ENCODE measurements at regions of chr2 and their contacts with region 1.

Region 1: DNA sequence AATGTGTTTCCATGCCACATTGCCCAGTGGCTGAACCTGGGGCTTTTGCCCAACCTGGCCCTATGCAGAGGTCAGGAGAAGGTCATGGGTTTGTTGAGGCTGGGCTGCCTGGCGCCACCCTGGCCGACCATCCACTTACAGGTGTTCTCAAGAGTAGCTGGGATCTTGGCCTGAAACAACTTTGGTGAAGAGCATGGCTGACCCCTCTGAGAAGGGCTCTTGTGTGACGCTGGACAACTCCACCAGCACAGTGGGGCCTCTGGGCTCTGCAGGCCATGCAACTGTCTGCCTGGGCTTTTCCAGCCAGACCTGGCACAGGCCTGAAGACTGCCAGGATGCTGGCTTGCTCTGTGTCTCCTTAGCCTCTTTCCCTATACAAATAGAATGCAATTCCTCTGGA is 76.4 kb upstream of the ZNG1B start:
- DNase-seq: no peak
- H3K4me3 ChIP-seq: no peak overlapping the region
- H3K27ac ChIP-seq: no peak overlapping the region
- H3K4me1 ChIP-seq: peaks cover 0 to 3% (median 0%) of the 10 kb centered on the region in 4 donors
- H3K27me3 ChIP-seq: no peaks in the 10 kb centered on the region
- CTCF ChIP-seq: no peak
- EP300 ChIP-seq: no peak
- POLR2A ChIP-seq: no peak

Region 2: GRCh38 chr2:113260991-113261390 is 100.1 kb before region 1 on chr2:
- in situ Hi-C with region 1: loop called in 2 of 4 experiments (anchors 10 to 25 kb)
- intact Hi-C with region 1: no loop called
- DNase-seq: no peak
- H3K4me3 ChIP-seq: no peak overlapping the region
- H3K27ac ChIP-seq: no peak overlapping the region
- H3K4me1 ChIP-seq: no peaks in the 10 kb centered on the region
- H3K27me3 ChIP-seq: no peaks in the 10 kb centered on the region
- CTCF ChIP-seq: no peak
- EP300 ChIP-seq: no peak
- POLR2A ChIP-seq: no peak

Region 3: DNA sequence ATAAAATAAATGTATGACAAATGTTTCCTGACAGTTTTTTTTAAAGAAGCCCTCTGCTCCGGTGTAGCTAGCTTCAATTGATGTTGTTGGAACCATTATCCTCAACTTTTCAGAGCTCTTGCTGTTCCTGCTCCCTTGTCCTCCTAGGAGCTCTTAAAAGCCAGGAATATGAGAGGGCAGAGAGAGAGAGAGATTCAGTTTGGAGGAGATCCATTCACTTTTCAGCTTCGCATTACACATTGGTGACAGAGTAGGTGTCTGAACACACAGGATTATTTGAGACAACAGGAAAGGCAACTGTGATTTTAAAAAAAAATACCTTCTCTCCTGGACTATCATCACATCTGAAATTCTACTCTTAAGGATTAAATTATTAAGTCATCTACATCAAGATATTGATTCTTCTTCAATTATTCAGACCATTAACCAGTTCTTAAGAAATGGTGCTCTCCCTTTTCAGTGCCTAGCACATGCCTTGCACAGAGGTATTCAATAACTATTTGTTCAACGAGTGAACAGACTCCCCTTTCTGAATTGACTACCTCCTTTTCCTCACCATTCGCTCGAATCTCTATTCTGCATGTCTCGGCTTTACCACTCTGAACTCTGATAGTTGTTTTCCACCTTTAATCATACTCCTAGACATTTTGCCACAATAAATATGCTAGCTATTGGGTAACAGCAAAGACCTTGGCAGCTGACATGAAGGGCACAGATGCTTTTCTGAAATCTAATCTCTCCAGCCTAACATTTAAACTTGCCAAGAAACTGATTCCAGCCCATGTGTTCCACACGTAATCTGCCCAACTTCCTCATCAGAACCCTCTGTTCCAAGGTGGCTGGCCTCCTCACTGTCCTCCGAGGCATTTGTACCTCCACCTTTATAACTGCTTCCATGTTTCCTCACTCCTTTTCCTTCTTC is 424.0 kb after region 1 on chr2:
- in situ Hi-C with region 1: no loop called
- intact Hi-C with region 1: no loop called
- DNase-seq: no peak
- H3K4me3 ChIP-seq: no peak overlapping the region
- H3K27ac ChIP-seq: no peak overlapping the region
- H3K4me1 ChIP-seq: no peaks in the 10 kb centered on the region
- H3K27me3 ChIP-seq: no peaks in the 10 kb centered on the region
- CTCF ChIP-seq: no peak
- EP300 ChIP-seq: no peak
- POLR2A ChIP-seq: no peak

Region 4: DNA sequence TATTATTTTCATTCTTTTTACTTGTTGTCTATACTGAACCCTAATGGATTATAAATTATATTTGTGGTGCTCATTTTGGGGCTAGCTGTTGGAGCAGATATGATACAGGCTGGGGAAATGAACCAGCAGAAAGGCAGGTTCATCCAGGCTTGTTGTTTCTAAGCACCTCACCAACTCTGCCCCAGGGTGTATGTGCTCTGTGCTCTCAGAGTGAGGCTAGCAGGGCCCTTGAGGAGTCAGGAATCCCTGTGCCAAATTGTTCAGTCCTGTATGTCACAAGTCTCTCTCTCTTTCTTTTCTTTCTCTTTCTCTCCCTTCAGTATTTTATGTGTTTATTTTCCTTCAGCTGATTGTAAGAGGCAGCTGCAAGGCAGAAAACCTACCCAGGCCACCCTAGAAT is 900.3 kb after region 1 on chr2:
- in situ Hi-C with region 1: no loop called
- intact Hi-C with region 1: no loop called
- DNase-seq: no peak
- H3K4me3 ChIP-seq: no peak overlapping the region
- H3K27ac ChIP-seq: no peak overlapping the region
- H3K4me1 ChIP-seq: no peaks in the 10 kb centered on the region
- H3K27me3 ChIP-seq: no peaks in the 10 kb centered on the region
- CTCF ChIP-seq: no peak
- EP300 ChIP-seq: no peak
- POLR2A ChIP-seq: no peak